ENCODE measurements at regions of chrX and their contacts with region 1.

Region 1: GRCh38 chrX:10722851-10723250 is 102.5 kb upstream of the MID1 start:
- DNase-seq: peak in 1 of 2 donors; percentile 79
- H3K4me3 ChIP-seq: no peak overlapping the region
- H3K27ac ChIP-seq: no peak overlapping the region
- H3K4me1 ChIP-seq: peaks cover 0 to 2% of the 10 kb centered on the region in 2 donors
- H3K27me3 ChIP-seq: no peaks in the 10 kb centered on the region
- CTCF ChIP-seq: peak; percentile 50 to 67 (median 62)

Region 2: DNA sequence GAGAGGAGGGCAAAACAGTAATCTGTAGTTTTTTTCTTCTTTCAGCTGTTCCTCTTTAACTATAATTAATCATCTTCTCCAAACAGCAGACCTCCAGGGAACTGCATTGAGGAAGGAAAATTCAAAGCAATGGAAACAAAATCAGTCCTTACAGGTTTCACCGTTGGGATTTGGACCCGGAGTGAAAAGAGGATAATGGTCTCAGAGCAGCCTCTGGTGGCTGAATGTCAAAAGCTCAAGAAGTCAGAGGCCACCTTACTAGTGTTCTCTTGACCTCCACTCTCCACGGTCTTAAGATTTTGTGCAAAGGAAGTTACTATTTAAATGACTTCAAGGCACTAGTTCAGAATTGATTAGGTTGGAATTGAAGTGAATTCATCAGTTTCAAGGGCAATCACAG is 86.5 kb before region 1 on chrX:
- intact Hi-C with region 1: loop called (anchors 10 kb)
- DNase-seq: no peak
- H3K4me3 ChIP-seq: peak overlapping the region in 1 of 2 donors; percentile 31
- H3K27ac ChIP-seq: peak overlapping the region in 1 of 2 donors; percentile 44
- H3K4me1 ChIP-seq: peaks cover 0 to 2% of the 10 kb centered on the region in 2 donors
- H3K27me3 ChIP-seq: no peaks in the 10 kb centered on the region
- CTCF ChIP-seq: peak; percentile 15 to 47 (median 20)

Region 3: GRCh38 chrX:10660171-10660570 is 62.7 kb before region 1 on chrX:
- intact Hi-C with region 1: no loop called
- DNase-seq: no peak
- H3K4me3 ChIP-seq: no peak overlapping the region
- H3K27ac ChIP-seq: no peak overlapping the region
- H3K4me1 ChIP-seq: no peaks in the 10 kb centered on the region
- H3K27me3 ChIP-seq: no peaks in the 10 kb centered on the region
- CTCF ChIP-seq: no peak